GM12878 (cell line): ENCODE measurements at regions of chr11 and their contacts with region 1.

Region 1: DNA sequence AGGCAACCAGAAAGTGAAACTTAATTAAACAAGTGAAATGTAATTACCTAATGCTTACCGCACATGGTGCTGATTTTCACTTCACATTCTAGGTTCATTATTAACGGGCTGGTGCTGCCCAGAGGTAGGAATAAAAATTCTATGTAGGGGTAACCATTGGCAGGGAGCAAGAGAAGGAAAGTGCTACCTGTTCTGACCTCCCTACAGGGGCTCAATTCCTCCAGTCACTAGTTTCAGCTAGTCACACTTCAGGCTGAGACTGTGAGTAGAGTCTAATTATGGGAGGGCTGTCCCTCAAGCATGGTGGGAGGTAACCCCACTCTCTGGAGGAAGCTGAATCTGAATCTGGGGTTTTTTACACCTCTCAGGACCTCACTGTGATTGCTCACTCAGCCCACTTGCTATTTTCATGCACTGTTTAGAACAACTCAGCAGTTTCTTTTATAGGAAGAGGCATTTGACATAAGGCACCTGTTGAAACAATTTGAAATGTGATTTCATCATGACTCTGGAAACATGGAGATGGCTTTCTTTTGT is 75.4 kb downstream of the MAML2 start:
- DNase-seq: peak; percentile 95
- ATAC-seq: peak; percentile 97
- H3K4me3 ChIP-seq: no peak overlapping the region
- H3K27ac ChIP-seq: peak overlapping the region; percentile 73
- H3K4me1 ChIP-seq: peaks cover 21% of the 10 kb centered on the region
- H3K27me3 ChIP-seq: no peaks in the 10 kb centered on the region
- CTCF ChIP-seq: no peak
- EP300 ChIP-seq: no peak; a peak in 1 of 4 replicates
- POLR2A ChIP-seq: peak; percentile 38; the same call in 1 of the 2 replicates
- RAD21 ChIP-seq: peak; percentile 21; the same call in 1 of the 2 replicates

Region 2: GRCh38 chr11:96235751-96236150 is 31.8 kb before region 1 on chr11:
- CTCF ChIA-PET with region 1: interaction called, 3 read pairs
- POLR2A ChIA-PET with region 1: no interaction called
- RAD21 ChIA-PET with region 1: no interaction called
- SMC1A ChIA-PET with region 1: interaction called, 13 read pairs
- in situ Hi-C with region 1: no loop called
- intact Hi-C with region 1: no loop called
- DNase-seq: no peak
- ATAC-seq: peak; percentile 98
- H3K4me3 ChIP-seq: no peak overlapping the region
- H3K27ac ChIP-seq: peak overlapping the region; percentile 53
- H3K4me1 ChIP-seq: peaks cover 7% of the 10 kb centered on the region
- H3K27me3 ChIP-seq: no peaks in the 10 kb centered on the region
- CTCF ChIP-seq: no peak
- EP300 ChIP-seq: no peak; a peak in 1 of 4 replicates
- POLR2A ChIP-seq: no peak
- RAD21 ChIP-seq: 0 out of 2 replicates have a peak, but pooled peaks have one; percentile 9

Region 3: GRCh38 chr11:96254087-96254486 is 13.5 kb before region 1 on chr11:
- CTCF ChIA-PET with region 1: interaction called, 9 read pairs
- POLR2A ChIA-PET with region 1: interaction called, 5 read pairs
- RAD21 ChIA-PET with region 1: interaction called, 7 read pairs
- SMC1A ChIA-PET with region 1: interaction called, 40 read pairs
- in situ Hi-C with region 1: no loop called
- intact Hi-C with region 1: no loop called
- DNase-seq: peak; percentile 91
- ATAC-seq: peak; percentile 58
- H3K4me3 ChIP-seq: peak overlapping the region; percentile 34
- H3K27ac ChIP-seq: peak overlapping the region; percentile 34
- H3K4me1 ChIP-seq: peaks cover 60% of the 10 kb centered on the region
- H3K27me3 ChIP-seq: no peaks in the 10 kb centered on the region
- CTCF ChIP-seq: no peak
- EP300 ChIP-seq: peak; percentile 19 to 62; a peak in 1 of 4 replicates
- POLR2A ChIP-seq: no peak
- RAD21 ChIP-seq: peak; percentile 23; the same call in 1 of the 2 replicates

Region 4: DNA sequence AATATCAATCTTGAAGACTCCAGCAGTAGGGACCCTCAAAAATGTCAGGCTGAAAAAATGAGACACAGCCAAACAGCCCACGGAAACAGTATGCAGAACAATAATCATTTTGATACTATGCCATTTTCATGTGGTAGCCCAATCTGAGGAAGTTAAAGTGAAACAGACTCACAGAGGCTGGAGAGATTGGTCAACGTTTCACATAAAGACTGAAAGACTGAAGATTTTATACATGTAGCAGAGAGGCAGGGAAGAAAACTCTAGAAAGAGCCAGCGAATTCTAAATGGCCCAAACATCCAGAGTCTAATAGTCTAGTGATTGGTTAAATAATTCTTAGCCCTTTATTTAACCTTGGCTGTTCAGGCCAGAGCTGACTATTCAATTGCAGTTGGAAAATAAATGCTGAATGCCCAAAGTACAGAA is 26.0 kb after region 1 on chr11:
- CTCF ChIA-PET with region 1: no interaction called
- POLR2A ChIA-PET with region 1: interaction called, 6 read pairs
- RAD21 ChIA-PET with region 1: no interaction called
- SMC1A ChIA-PET with region 1: interaction called, 8 read pairs
- in situ Hi-C with region 1: no loop called
- intact Hi-C with region 1: loop called (anchors 1 kb)
- DNase-seq: peak; percentile 69
- ATAC-seq: peak; percentile 91
- H3K4me3 ChIP-seq: peak overlapping the region; percentile 34; the same call in 1 of the 2 replicates
- H3K27ac ChIP-seq: peak overlapping the region; percentile 65
- H3K4me1 ChIP-seq: peaks cover 32% of the 10 kb centered on the region
- H3K27me3 ChIP-seq: no peaks in the 10 kb centered on the region
- CTCF ChIP-seq: no peak
- EP300 ChIP-seq: no peak; a peak in 1 of 4 replicates
- POLR2A ChIP-seq: no peak
- RAD21 ChIP-seq: no peak